Pancreas (tissue), 10 donors: ENCODE measurements at regions of chr22 and their contacts with region 1.

Region 1: GRCh38 chr22:46006379-46007002 is 29.5 kb upstream of the WNT7B start:
- DNase-seq: peak; percentile 85 to 99 (median 92)
- ATAC-seq: peak; percentile 73 to 82 (median 80)
- H3K4me3 ChIP-seq: no peak overlapping the region
- H3K27ac ChIP-seq: peak overlapping the region; percentile 75 to 93 (median 85)
- H3K4me1 ChIP-seq: peaks cover 0 to 25% (median 7%) of the 10 kb centered on the region in 3 donors
- H3K27me3 ChIP-seq: no peaks in the 10 kb centered on the region
- CTCF ChIP-seq: peak; percentile 97 to 98 (median 97)

Region 2: GRCh38 chr22:46116491-46116958 is 110.0 kb after region 1 on chr22:
- intact Hi-C with region 1: loop called (anchors 2 to 10 kb)
- DNase-seq: peak; percentile 94 to 99 (median 97)
- ATAC-seq: peak; percentile 76 to 85 (median 80)
- H3K4me3 ChIP-seq: no peak overlapping the region
- H3K27ac ChIP-seq: peak overlapping the region; percentile 13 to 55 (median 50)
- H3K4me1 ChIP-seq: peaks cover 0 to 7% (median 3%) of the 10 kb centered on the region in 3 donors
- H3K27me3 ChIP-seq: no peaks in the 10 kb centered on the region
- CTCF ChIP-seq: peak; percentile 64 to 70 (median 66)

Region 3: GRCh38 chr22:46122511-46122971 is 116.0 kb after region 1 on chr22:
- intact Hi-C with region 1: loop called (anchors 2 to 10 kb)
- DNase-seq: peak in 5 of 6 donors; percentile 54 to 93 (median 83)
- ATAC-seq: peak; percentile 47 to 80 (median 74)
- H3K4me3 ChIP-seq: no peak overlapping the region
- H3K27ac ChIP-seq: no peak overlapping the region
- H3K4me1 ChIP-seq: no peaks in the 10 kb centered on the region
- H3K27me3 ChIP-seq: no peaks in the 10 kb centered on the region
- CTCF ChIP-seq: peak; percentile 86 to 95 (median 90)

Region 4: GRCh38 chr22:46320166-46320710 is 313.7 kb after region 1 on chr22:
- intact Hi-C with region 1: loop called in 1 of 3 experiments (anchors 5 kb)
- DNase-seq: peak in 2 of 6 donors; percentile 3 to 37
- ATAC-seq: no peak
- H3K4me3 ChIP-seq: no peak overlapping the region
- H3K27ac ChIP-seq: no peak overlapping the region
- H3K4me1 ChIP-seq: no peaks in the 10 kb centered on the region
- H3K27me3 ChIP-seq: no peaks in the 10 kb centered on the region
- CTCF ChIP-seq: no peak